Right cardiac atrium (tissue), 5 donors: ENCODE measurements at regions of chr6 and their contacts with region 1.

Region 1: DNA sequence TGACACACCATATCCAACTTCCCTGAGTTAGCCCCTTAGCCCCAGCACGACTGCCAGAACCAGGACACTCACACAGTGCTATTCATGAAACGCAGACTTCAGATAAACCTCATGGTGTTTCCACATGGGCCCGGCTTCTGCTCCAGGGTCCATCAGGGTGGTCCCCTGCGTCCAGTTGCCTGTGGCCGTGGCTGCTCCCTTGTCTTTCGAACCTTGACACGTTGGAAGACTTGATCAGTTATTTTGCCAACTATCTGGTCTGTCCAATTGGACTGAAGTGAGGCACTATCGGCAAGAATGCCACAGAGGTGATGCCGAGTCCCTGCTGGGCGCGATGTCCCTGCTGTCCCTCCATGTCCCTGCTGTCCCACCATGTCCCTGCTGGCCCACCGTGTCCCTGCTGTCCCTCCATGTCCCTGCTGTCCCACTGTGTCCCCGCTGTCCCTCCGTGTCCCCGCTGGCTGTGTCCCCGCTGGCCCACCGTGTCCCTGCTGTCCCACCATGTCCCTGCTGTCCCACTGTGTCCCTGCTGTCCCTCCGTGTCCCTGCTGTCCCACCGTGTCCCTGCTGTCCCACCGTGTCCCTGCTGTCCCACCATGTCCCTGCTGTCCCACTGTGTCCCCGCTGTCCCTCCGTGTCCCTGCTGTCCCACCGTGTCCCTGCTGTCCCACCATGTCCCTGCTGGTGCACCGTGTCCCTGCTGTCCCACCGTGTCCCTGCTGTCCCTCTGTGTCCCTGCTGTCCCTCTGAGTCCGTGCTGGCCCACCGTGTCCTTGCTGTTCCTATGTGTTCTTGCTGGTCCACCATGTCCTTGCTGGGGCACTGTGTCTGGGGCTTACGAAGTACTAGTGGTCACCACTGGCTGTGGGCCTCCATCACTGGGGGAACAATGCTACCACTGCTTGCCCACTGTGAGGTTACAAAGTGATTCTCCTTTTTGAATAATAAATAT is 251.4 kb downstream of the DLL1 start:
- DNase-seq: peak in 2 of 3 donors; percentile 2 to 43
- ATAC-seq: no peak
- H3K4me3 ChIP-seq: no peak overlapping the region
- H3K27ac ChIP-seq: no peak overlapping the region
- H3K4me1 ChIP-seq: no peaks in the 10 kb centered on the region
- H3K27me3 ChIP-seq: no peaks in the 10 kb centered on the region

Region 2: DNA sequence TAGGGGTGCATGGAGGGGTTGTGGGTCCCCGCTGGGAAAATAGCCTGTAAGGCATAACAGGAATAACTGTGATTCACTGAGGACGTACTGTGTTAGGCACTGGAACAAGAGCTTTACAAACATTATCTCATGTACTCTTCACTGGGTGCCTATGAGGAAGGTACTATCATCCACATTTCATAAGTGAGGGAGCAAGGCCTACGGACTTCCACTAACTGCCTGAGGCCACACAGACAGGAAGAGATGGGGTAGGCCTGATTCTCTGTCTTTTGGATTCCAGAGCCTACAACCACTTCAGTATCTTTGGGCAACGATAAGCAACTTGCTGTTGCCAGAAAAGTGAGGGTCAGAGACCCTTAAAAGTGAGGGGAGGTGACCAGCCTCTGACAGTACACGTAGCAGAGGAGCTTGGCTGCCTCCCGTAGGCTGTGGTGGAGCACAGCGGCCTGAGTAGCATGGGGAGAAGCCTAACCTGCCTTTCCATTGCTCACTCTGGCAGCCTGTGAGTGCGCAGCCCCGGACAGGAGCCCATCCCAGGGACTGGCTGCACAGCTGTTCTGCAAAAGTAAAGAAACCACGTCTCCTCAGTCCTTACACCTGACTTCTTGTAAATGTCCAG is 483.2 kb after region 1 on chr6:
- intact Hi-C with region 1: loop called in 1 of 4 experiments (anchors 5 kb)
- DNase-seq: peak in 1 of 3 donors; percentile 60
- ATAC-seq: peak; percentile 76 to 77
- H3K4me3 ChIP-seq: no peak overlapping the region
- H3K27ac ChIP-seq: peak overlapping the region; percentile 91
- H3K4me1 ChIP-seq: peaks cover 7% of the 10 kb centered on the region
- H3K27me3 ChIP-seq: no peaks in the 10 kb centered on the region